Mammary epithelial cell (primary cell): ENCODE measurements at regions of chr4 and their contacts with region 1.

Region 1: GRCh38 chr4:845233-845835 is 19.4 kb upstream of the CPLX1 start:
- DNase-seq: no peak
- H3K4me3 ChIP-seq: no peak overlapping the region
- H3K27ac ChIP-seq: no peak overlapping the region
- H3K4me1 ChIP-seq: no peaks in the 10 kb centered on the region
- H3K27me3 ChIP-seq: no peaks in the 10 kb centered on the region
- CTCF ChIP-seq: no peak

Region 2: DNA sequence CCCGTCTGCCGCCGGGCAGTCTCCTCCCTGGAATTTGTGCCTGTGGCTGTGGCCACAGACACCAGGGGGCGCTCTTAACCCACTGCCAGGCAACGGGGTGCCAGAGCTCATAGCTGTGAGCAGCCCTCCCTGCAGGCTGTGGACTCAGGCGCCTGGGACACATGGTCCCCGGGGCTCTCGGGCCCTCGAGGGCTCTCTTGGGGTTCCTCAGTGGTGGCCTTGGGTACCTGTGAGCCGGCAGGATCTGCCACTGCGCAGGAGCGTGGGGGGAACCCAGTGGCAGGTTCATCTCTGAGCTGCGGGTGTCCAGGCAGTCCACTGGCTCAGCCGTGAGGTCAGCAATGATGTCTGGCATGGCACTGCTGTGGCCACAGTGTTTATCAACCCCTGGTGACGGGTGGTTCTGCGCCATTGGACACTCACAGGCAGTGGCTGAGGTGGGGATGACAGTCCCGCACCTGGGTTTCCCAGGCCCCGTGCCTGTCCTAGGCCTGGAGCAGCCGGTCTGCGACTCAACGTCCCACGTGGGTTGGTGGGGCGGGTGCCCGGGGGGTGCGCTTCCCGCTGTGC is 102.5 kb before region 1 on chr4:
- CTCF ChIA-PET with region 1: no interaction called
- dilution Hi-C with region 1: loop called (anchors 5 kb)
- in situ Hi-C with region 1: no loop called
- intact Hi-C with region 1: no loop called
- DNase-seq: peak; percentile 40
- H3K4me3 ChIP-seq: no peak overlapping the region
- H3K27ac ChIP-seq: no peak overlapping the region
- H3K4me1 ChIP-seq: no peaks in the 10 kb centered on the region
- H3K27me3 ChIP-seq: no peaks in the 10 kb centered on the region
- CTCF ChIP-seq: peak; percentile 71 to 88

Region 3: GRCh38 chr4:891747-892146 is 46.4 kb after region 1 on chr4:
- CTCF ChIA-PET with region 1: no interaction called
- dilution Hi-C with region 1: loop called (anchors 5 kb)
- in situ Hi-C with region 1: no loop called
- intact Hi-C with region 1: no loop called
- DNase-seq: no peak
- H3K4me3 ChIP-seq: no peak overlapping the region
- H3K27ac ChIP-seq: no peak overlapping the region
- H3K4me1 ChIP-seq: no peaks in the 10 kb centered on the region
- H3K27me3 ChIP-seq: no peaks in the 10 kb centered on the region
- CTCF ChIP-seq: peak in 1 of 2 donors; percentile 28

Region 4: GRCh38 chr4:973431-974397 is 128.4 kb after region 1 on chr4 and contains the start of gene DGKQ:
- CTCF ChIA-PET with region 1: no interaction called
- dilution Hi-C with region 1: loop called (anchors 5 kb)
- in situ Hi-C with region 1: no loop called
- intact Hi-C with region 1: no loop called
- DNase-seq: peak; percentile 69
- H3K4me3 ChIP-seq: peak within 1 kb of the TSS; percentile 71 to 86 (median 82)
- H3K27ac ChIP-seq: no peak within 1 kb of the TSS
- H3K4me1 ChIP-seq: peaks cover 25% of the 10 kb centered on the region
- H3K27me3 ChIP-seq: no peaks in the 10 kb centered on the region
- CTCF ChIP-seq: no peak
- total RNA-seq, gene DGKQ: 13.7 to 13.8 TPM